Left cardiac atrium (tissue), 4 donors: ENCODE measurements at regions of chr14 and their contacts with region 1.

Region 1: DNA sequence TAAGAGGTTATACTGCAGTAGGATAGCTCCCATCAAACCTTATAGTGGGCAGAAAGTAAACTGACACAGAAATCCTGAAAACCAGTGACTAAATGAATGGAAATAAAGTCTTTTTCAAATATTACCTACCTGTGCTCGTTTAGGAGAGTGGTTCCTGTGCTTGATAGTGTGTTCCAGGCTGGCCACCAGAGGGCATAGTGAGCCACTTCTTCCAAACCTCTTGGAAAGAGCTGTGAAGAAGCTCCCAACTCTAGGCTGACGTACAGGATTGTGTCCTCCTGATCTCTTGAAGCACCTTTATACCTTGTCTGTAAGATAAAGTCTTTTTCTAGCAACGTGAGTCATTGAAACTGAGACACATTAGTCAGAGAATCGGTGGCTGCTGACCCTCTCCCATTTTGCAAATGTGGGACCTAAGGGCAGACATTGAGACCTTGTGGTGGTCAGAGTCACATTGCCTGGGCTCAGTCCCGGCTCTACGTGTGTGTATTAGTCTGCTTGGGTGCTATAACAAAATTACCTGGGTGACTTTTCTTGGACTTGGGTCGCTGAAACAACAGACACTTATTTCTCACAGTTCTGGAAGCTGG is 17.6 kb downstream of the TDP1 start:
- DNase-seq: peak; percentile 68
- ATAC-seq: peak; percentile 87 to 91

Region 2: GRCh38 chr14:90235179-90235976 is 262.0 kb after region 1 on chr14:
- intact Hi-C with region 1: loop called (anchors 1 to 5 kb)
- DNase-seq: peak; percentile 59
- ATAC-seq: peak; percentile 83 to 88

Region 3: GRCh38 chr14:90487031-90487430 is 513.7 kb after region 1 on chr14:
- intact Hi-C with region 1: no loop called
- DNase-seq: peak; percentile 59
- ATAC-seq: peak in 1 of 2 donors; percentile 9